ENCODE measurements at regions of chr3 and their contacts with region 1.

Region 1: DNA sequence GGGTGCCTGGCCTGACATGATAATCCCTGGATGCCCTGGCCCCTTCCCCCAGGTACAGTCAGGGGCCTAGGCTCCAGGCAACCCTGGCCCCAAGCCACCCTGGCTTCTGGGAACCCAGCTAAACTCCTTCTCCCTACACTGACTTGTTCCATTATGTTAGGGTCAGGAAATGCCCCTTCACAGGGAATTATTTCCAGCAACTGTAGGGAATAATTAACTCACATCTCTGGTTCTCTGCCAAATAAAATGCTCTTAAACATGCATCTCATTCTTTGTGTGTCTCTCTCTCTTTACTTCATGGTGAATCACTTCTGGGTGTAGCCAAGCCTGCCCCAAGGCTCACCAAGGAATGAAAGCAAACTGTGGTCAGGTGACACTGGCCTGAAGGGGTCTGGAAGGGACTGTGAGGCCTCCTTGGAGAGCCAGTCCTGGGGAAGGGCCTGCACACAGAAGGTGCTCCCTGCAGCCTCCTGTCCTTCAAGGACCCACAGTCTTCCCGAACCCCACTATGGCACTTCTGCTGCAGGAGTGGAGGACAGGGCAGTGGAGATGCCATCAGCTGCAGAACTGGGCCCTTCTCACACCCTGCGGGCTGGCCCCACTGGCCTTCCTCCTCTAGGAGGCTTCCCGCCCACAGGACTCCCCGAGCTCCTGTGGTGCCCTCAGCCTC is 17.6 kb downstream of the TKT start:
- DNase-seq: no peak
- H3K4me3 ChIP-seq: no peak overlapping the region
- H3K27ac ChIP-seq: peak overlapping the region; percentile 56 to 73
- H3K4me1 ChIP-seq: peaks cover 9 to 18% of the 10 kb centered on the region in 2 donors
- H3K27me3 ChIP-seq: no peaks in the 10 kb centered on the region
- CTCF ChIP-seq: no peak

Region 2: DNA sequence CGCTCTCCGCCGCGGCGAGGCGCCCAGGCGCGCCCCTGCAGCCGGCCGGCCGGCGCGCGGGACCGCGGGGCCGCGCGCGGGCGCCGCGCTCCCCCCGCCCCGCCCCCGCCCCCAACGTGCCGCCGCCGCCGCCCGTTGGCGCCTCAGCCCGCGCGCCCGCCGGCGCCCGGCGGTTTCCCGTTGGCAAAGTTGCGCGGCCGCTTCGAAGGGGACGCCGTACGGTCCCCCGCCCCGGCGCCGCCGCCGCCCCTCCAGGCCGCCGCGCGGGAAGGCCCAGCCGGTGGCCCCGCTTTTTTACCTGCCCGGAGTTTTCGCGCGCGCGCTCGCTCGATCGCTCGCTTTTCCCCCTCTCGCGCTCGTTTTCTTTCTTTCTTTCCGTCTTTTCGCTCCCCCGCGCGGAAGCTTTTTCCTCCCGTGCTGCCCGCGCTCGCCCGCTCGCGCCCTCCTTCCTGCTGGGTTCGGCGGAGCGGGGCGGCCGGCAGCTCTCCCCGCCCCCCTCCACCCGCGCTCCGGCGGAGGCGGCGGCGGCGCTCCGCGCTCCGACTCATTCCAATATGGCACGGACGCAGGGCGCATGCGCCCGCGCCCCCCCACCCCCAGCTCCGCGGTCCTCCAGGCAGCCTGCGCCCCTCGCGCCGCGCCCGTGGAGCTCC is 192.5 kb before region 1 on chr3 and contains the start of gene SFMBT1:
- intact Hi-C with region 1: no loop called
- DNase-seq: peak in 1 of 2 donors; percentile 76
- H3K4me3 ChIP-seq: peak within 1 kb of the TSS; percentile 99 to 100
- H3K27ac ChIP-seq: peak within 1 kb of the TSS; percentile 78 to 90
- H3K4me1 ChIP-seq: peaks cover 0 to 4% of the 10 kb centered on the region in 2 donors
- H3K27me3 ChIP-seq: no peaks in the 10 kb centered on the region
- CTCF ChIP-seq: no peak
- total RNA-seq, gene SFMBT1: 1.4 TPM

Region 3: GRCh38 chr3:53255775-53256703 is 17.9 kb after region 1 on chr3 and contains the start of gene TKT:
- intact Hi-C with region 1: loop called (anchors 2 kb)
- DNase-seq: peak; percentile 22 to 92
- H3K4me3 ChIP-seq: peak within 1 kb of the TSS; percentile 63 to 87
- H3K27ac ChIP-seq: peak within 1 kb of the TSS; percentile 73 to 81
- H3K4me1 ChIP-seq: peaks cover 0 to 34% of the 10 kb centered on the region in 2 donors
- H3K27me3 ChIP-seq: no peaks in the 10 kb centered on the region
- CTCF ChIP-seq: no peak
- total RNA-seq, gene TKT: 219 TPM

Measured in ascending aorta (tissue), 2 donors.